A673 (cell line): ENCODE measurements at regions of chr1 and their contacts with region 1.

Region 1: GRCh38 chr1:37890378-37891014 is 31.1 kb upstream of the MTF1 start:
- DNase-seq: peak; percentile 54
- H3K4me3 ChIP-seq: no peak overlapping the region
- H3K27ac ChIP-seq: no peak overlapping the region
- H3K4me1 ChIP-seq: no peaks in the 10 kb centered on the region
- H3K27me3 ChIP-seq: no peaks in the 10 kb centered on the region
- CTCF ChIP-seq: peak; percentile 62

Region 2: DNA sequence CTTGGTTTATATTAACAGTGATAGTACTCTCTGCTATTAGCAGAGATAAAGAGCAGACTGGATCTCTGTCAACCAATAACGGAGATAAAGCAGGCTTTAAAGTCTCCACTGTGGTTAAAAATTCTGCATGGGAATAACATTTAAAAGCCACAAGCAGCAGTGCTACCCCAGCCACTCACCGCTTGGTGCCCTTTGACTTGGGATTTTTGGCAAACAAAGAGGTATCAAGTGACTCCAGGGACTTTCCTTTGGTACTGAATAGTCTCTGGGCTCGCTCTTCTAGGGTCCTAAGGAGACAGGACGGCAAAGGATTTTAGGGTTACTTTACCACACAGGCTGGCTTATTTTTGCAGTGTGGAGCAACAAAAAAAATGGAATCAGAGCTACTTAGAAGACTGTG is 88.0 kb after region 1 on chr1:
- CTCF ChIA-PET with region 1: no interaction called
- POLR2A ChIA-PET with region 1: no interaction called
- intact Hi-C with region 1: loop called (anchors 1 kb)
- DNase-seq: no peak
- H3K4me3 ChIP-seq: no peak overlapping the region
- H3K27ac ChIP-seq: no peak overlapping the region
- H3K4me1 ChIP-seq: no peaks in the 10 kb centered on the region
- H3K27me3 ChIP-seq: no peaks in the 10 kb centered on the region
- CTCF ChIP-seq: no peak

Region 3: GRCh38 chr1:37989361-37989930 is 99.0 kb after region 1 on chr1:
- CTCF ChIA-PET with region 1: no interaction called
- POLR2A ChIA-PET with region 1: no interaction called
- intact Hi-C with region 1: no loop called
- DNase-seq: no peak
- H3K4me3 ChIP-seq: peak overlapping the region; percentile 73
- H3K27ac ChIP-seq: peak overlapping the region; percentile 75
- H3K4me1 ChIP-seq: peaks cover 3% of the 10 kb centered on the region
- H3K27me3 ChIP-seq: no peaks in the 10 kb centered on the region
- CTCF ChIP-seq: no peak